ENCODE measurements at regions of chr21 and their contacts with region 1.

Region 1: DNA sequence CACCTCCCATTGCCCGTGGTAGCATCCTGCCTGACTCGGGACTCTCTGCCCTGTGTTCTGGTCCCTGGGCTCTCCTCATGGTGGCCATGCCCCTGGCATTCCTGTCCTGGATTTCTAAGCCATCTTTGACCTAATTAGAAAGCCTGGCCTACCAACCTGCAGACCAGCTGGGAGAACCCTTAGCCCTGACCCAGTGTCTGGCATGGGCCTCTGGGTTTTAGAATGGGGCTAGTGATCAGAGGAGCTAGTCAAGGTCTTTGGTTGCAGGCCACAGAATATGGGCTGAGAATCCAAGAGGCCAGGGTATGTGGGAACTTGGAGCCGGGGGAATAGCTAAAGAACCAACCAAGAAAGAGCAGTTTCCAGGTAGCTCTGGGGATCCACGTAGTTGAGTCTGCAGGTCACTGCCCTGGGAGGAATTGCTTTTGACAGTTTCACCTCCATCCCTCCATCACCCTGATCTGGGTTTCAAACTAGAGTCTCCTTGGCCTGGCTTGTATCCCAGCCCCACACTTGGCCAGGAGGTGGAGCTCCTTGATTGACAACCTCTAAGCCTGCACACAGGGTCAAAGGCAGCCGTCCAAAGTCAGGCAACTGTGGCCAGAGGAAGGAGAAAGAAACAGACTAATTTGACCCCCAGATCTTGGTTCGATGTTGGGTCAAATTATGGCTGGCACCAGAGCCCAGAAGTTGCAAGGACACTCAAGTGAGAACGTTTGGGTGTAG is 54.7 kb upstream of the ABCG1 start:
- DNase-seq: peak in 1 of 2 donors; percentile 75
- H3K4me3 ChIP-seq: no peak overlapping the region
- H3K27ac ChIP-seq: no peak overlapping the region
- H3K4me1 ChIP-seq: no peaks in the 10 kb centered on the region
- H3K27me3 ChIP-seq: no peaks in the 10 kb centered on the region
- CTCF ChIP-seq: peak; percentile 13 to 36 (median 36)

Region 2: DNA sequence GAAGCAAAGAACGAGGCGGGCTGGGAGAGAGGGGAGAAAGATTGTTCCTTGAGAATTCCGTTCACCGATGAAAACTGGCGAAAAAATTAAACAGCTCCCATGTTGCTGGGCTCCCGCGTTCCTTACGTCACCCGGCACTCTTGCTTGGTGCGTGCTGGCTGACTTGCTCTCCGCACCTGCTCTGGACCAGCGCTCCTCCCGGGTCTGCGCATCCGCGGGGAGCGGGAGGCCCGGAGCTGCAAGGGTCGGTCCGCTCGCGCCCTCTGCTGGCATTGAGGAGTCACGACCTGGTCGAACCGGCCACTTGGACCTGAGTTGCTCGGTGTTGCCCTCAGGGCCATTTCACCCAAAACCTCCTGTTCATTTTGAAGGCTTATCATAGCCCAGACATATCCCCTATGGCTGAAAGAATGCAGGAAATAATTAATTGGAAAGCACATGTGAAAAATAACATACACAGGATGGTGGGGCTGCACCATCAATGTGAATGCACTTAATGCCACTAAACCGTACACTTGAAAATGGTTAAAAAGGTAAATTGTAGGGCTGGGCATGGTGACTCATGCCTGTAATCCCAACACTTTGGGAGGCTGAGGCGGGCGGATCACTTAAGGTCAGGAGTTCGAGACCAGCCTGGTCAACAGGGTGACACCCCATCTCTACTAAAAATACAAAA is 1095.1 kb before region 1 on chr21:
- intact Hi-C with region 1: loop called (anchors 5 kb)
- DNase-seq: peak in 1 of 2 donors; percentile 80
- H3K4me3 ChIP-seq: peak overlapping the region; percentile 37 to 45
- H3K27ac ChIP-seq: no peak overlapping the region
- H3K4me1 ChIP-seq: no peaks in the 10 kb centered on the region
- H3K27me3 ChIP-seq: no peaks in the 10 kb centered on the region
- CTCF ChIP-seq: peak; percentile 63 to 76 (median 72)

Region 3: GRCh38 chr21:41973861-41974751 is 190.1 kb before region 1 on chr21:
- intact Hi-C with region 1: no loop called
- DNase-seq: no peak
- H3K4me3 ChIP-seq: no peak overlapping the region
- H3K27ac ChIP-seq: no peak overlapping the region
- H3K4me1 ChIP-seq: no peaks in the 10 kb centered on the region
- H3K27me3 ChIP-seq: no peaks in the 10 kb centered on the region
- CTCF ChIP-seq: peak in 1 of 3 experiments; percentile 7

Region 4: DNA sequence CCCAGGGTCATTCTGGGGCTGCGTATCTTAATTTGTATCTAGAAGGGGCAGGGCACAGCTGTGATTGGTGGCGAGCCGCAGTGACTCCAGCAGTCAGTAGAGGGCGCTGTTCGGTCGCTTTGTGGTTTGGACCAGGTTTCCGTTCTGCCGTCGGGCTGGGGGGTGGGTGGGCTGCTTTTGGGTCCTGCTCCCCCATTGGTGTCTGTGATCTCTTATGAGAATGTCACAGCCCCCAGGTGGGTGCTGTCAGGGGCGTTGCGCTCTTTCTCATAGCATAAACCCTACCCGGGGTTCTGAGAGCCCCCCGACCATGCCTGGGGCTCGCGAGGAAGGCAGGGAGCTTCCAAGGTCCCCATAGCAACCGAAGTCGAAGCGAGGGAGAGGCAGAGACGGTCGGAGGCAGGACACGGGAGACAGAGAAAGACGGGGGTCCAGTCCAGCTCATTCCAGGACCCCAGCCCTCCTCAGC is 145.6 kb after region 1 on chr21:
- intact Hi-C with region 1: no loop called
- DNase-seq: peak in 1 of 2 donors; percentile 70
- H3K4me3 ChIP-seq: no peak overlapping the region
- H3K27ac ChIP-seq: no peak overlapping the region
- H3K4me1 ChIP-seq: no peaks in the 10 kb centered on the region
- H3K27me3 ChIP-seq: no peaks in the 10 kb centered on the region
- CTCF ChIP-seq: peak; percentile 29 to 49 (median 41)

Measured in ascending aorta (tissue), 2 donors.